ENCODE measurements at regions of chr11 and their contacts with region 1.

Region 1: GRCh38 chr11:7513234-7514098 is at the start of gene PPFIBP2:
- DNase-seq: peak; percentile 80
- H3K4me3 Mint-ChIP-seq: peak within 1 kb of the TSS; percentile 91
- H3K27ac Mint-ChIP-seq: peak within 1 kb of the TSS; percentile 84
- H3K4me1 Mint-ChIP-seq: peaks cover 10% of the 10 kb centered on the region
- H3K27me3 Mint-ChIP-seq: peaks cover 33% of the 10 kb centered on the region
- total RNA-seq, gene PPFIBP2: 0.62 and 2.9 TPM in 2 replicates

Region 2: DNA sequence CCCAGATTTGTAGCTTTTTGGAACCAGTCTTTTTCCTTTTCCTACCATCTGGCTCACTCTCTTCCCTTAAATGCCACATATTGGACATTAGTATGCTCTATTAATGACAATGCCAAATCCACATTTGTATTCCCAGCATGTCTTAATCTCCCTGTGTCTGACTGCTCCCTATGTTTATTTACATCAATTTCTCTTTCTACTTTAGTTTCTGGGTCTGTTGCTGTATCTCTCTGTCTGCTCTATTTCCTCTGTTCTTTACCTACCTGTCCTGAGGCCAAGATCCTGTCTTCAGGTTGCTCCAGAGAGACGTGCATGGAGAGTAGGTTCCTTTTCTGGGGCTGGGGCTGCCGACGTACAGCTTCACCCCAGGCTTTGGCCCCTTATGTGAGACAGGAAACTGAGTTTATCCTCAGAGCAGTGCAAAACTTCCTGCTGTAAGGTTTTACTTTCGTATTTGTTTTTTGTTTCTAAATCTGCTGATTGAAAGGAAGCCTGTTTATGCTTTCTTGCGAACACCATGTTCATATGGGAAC is 767.3 kb before region 1 on chr11:
- intact Hi-C with region 1: loop called (anchors 2 kb)
- DNase-seq: peak; percentile 40
- H3K4me3 Mint-ChIP-seq: no peak overlapping the region
- H3K27ac Mint-ChIP-seq: no peak overlapping the region
- H3K4me1 Mint-ChIP-seq: no peaks in the 10 kb centered on the region
- H3K27me3 Mint-ChIP-seq: no peaks in the 10 kb centered on the region

Region 3: DNA sequence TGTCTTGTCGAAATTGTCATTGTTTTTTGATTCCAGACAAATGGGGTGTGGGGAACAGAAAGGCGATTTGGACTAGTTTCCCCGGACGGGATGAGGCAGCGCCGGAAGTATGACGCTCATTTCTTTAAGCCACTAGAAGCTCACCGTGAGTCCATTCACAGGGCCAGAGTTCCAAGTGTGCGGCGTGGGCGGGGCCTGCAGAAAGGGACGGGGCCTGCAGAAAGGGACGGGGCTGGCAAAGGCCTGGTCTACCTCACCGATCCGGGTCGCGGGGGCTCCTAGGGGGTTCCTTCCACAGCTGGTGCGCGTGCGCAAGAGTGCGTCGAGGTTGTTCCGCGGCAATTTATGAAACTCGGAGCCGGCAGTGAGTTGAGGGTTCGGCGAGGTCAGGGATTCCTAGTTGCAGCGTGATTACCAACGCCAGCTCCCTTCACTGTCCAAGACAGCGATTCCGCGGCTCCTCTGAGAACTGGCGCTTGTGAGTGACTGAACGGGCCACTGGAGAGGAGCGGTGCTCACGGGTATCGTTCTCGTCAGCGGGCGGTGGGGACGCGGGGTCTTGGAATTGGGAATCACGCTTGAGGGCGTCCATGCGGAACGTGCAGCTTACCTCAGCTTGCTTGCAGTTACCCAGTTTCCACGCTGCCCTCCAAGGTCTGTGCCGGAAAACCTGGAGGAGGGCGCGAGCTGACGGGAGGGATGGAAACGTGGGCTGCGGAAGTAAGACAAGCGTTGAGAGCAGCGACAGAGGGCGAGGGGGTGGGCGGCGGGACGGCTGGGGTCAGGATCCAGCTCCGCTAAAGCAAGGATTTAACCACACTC is 587.0 kb before region 1 on chr11 and contains the start of gene ZNF215:
- intact Hi-C with region 1: loop called (anchors 10 kb)
- DNase-seq: peak; percentile 33
- H3K4me3 Mint-ChIP-seq: peak within 1 kb of the TSS; percentile 86
- H3K27ac Mint-ChIP-seq: peak within 1 kb of the TSS; percentile 46
- H3K4me1 Mint-ChIP-seq: peaks cover 23% of the 10 kb centered on the region
- H3K27me3 Mint-ChIP-seq: peaks cover 28% of the 10 kb centered on the region
- total RNA-seq, gene ZNF215: 1.8 and 2.1 TPM in 2 replicates

Region 4: DNA sequence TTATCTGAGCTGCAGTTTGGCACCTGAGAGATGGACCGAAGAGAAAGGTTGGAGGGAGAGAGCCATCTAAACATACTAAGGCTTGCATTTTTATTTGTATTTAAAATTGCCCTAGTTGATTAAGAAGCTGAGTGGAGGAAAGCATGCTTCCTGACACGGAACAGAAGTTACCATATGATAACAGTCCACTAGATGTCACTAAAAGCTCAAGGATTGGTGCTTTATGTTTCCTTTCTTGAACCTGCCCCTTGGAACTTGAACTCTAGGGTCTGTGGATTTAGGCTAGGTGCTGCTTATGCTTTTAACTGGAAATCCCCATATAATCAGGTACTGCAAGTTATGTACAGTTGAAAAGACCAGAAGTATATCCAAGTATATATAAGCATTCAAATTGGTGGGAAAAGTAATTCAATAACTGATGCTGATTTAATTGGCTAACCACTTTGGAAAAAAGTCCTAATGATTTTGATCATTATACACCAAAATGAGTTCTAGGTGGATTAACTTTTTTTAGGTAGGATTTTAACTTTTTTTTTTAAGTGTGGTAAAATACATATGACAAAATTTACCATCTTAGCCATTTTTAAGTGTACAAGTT is 415.1 kb before region 1 on chr11:
- intact Hi-C with region 1: loop called (anchors 1 kb)
- DNase-seq: no peak
- H3K4me3 Mint-ChIP-seq: no peak overlapping the region
- H3K27ac Mint-ChIP-seq: no peak overlapping the region
- H3K4me1 Mint-ChIP-seq: no peaks in the 10 kb centered on the region
- H3K27me3 Mint-ChIP-seq: peaks cover 16% of the 10 kb centered on the region

Region 5: GRCh38 chr11:7299393-7299792 is 214.1 kb before region 1 on chr11:
- intact Hi-C with region 1: no loop called
- DNase-seq: no peak
- H3K4me3 Mint-ChIP-seq: no peak overlapping the region
- H3K27ac Mint-ChIP-seq: no peak overlapping the region
- H3K4me1 Mint-ChIP-seq: no peaks in the 10 kb centered on the region
- H3K27me3 Mint-ChIP-seq: no peaks in the 10 kb centered on the region

Region 6: GRCh38 chr11:7665473-7666291 is 152.2 kb after region 1 on chr11:
- intact Hi-C with region 1: loop called (anchors 1 kb)
- DNase-seq: peak; percentile 63
- H3K4me3 Mint-ChIP-seq: no peak overlapping the region
- H3K27ac Mint-ChIP-seq: no peak overlapping the region
- H3K4me1 Mint-ChIP-seq: peaks cover 4% of the 10 kb centered on the region
- H3K27me3 Mint-ChIP-seq: peaks cover 2% of the 10 kb centered on the region

Region 7: DNA sequence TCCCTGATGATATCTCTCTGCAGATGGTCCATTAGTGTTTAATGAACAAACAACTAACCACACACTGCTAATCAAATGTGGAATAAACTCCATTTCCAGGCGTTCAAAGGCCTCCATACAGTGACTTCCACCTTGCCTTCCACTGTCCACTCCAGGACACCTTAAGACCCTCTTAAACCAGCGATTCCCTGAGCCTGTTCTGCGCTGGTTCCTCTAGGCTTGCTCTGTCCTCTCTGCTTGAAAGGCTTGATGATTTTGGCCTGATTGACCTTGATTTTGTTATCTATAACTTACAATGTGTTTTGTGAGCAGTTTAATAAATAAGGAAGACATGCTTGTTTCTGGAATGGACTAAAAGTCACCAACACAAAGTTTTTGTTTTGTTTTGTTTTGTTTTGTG is 180.8 kb after region 1 on chr11:
- intact Hi-C with region 1: loop called (anchors 1 kb)
- DNase-seq: no peak
- H3K4me3 Mint-ChIP-seq: no peak overlapping the region
- H3K27ac Mint-ChIP-seq: no peak overlapping the region
- H3K4me1 Mint-ChIP-seq: no peaks in the 10 kb centered on the region
- H3K27me3 Mint-ChIP-seq: peaks cover 35% of the 10 kb centered on the region

Region 8: GRCh38 chr11:7986768-7987559 is 473.5 kb after region 1 on chr11 and contains the start of gene EIF3F:
- intact Hi-C with region 1: loop called (anchors 1 kb)
- DNase-seq: peak; percentile 91
- H3K4me3 Mint-ChIP-seq: peak within 1 kb of the TSS; percentile 99
- H3K27ac Mint-ChIP-seq: peak within 1 kb of the TSS; percentile 93
- H3K4me1 Mint-ChIP-seq: peaks cover 39% of the 10 kb centered on the region
- H3K27me3 Mint-ChIP-seq: peaks cover 2% of the 10 kb centered on the region
- total RNA-seq, gene EIF3F: 210 and 214 TPM in 2 replicates